A673 (cell line): ENCODE measurements at regions of chr16 and their contacts with region 1.

Region 1: GRCh38 chr16:46908540-46909372 is 24.6 kb downstream of the GPT2 start:
- DNase-seq: peak; percentile 80
- H3K4me3 ChIP-seq: no peak overlapping the region
- H3K27ac ChIP-seq: no peak overlapping the region
- H3K4me1 ChIP-seq: no peaks in the 10 kb centered on the region
- H3K27me3 ChIP-seq: no peaks in the 10 kb centered on the region
- CTCF ChIP-seq: peak; percentile 69

Region 2: DNA sequence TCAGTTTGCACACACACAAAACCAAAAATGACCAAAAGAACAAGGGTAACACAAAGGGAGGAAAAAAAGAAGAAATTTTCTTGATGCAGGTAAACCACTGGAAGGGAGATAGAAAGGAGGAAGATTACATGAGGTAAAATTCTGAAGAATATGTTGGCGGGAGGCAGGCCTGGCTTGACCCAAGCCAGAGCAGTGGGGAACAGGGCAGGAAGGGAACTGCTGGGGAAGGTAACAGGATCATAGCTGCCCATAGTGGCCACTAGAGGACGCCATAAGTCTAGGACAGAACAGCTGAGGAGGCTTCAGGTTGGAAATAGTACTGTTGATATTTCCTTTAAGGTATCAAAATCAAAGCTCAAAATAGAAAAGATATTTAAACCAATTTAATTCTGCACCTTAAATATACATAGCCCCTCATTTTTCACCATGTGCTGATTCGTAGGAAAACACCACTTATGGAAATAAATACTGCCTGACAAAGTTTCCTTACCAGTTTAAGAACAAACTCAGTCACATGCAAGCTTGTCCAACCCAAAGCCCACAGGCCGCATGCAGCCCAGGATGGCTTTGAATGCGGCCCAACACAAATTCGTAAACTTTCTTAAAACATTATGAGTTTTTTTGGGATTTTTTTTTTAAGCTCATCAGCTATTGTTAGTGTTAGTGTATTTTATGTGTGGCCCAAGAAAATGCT is 235.3 kb before region 1 on chr16:
- CTCF ChIA-PET with region 1: interaction called, 3 read pairs
- POLR2A ChIA-PET with region 1: no interaction called
- intact Hi-C with region 1: loop called (anchors 1 kb)
- DNase-seq: peak; percentile 71
- H3K4me3 ChIP-seq: no peak overlapping the region
- H3K27ac ChIP-seq: no peak overlapping the region
- H3K4me1 ChIP-seq: no peaks in the 10 kb centered on the region
- H3K27me3 ChIP-seq: no peaks in the 10 kb centered on the region
- CTCF ChIP-seq: peak; percentile 91

Region 3: GRCh38 chr16:46853713-46854443 is 54.9 kb before region 1 on chr16:
- CTCF ChIA-PET with region 1: interaction called, 41 read pairs
- POLR2A ChIA-PET with region 1: no interaction called
- intact Hi-C with region 1: loop called (anchors 1 kb)
- DNase-seq: peak; percentile 79
- H3K4me3 ChIP-seq: no peak overlapping the region
- H3K27ac ChIP-seq: no peak overlapping the region
- H3K4me1 ChIP-seq: no peaks in the 10 kb centered on the region
- H3K27me3 ChIP-seq: no peaks in the 10 kb centered on the region
- CTCF ChIP-seq: peak; percentile 84

Region 4: DNA sequence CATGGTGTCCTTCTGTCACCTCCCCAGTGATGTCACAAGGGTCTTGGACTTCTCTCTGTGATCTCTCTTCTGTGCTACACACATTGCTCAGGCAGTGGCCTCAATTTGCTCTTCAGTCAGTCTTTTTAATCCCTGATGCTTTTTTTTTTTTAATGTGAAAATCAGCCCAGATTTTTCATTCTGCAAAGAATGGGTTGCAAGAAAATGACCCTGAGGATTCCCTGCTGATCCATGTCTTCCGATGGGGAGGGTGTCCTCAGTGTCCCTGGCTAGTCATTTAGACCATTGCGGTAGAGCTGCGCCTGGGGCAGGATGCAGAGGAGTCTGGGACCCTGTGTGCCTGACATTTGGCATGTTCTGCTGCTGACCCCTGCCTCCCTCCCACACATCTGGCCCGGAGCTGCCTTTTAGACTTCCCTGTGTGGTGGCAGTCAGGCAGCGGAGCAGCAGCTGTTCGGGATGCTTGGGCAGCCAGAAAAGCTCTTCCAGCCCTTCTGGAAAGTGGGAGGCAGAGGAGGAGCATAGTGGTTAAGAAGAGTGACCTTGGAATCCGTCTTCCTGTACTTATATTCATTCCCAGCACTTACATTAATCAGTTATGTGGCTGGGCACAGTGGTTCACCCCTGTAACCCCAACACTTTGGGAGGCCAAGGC is 12.3 kb before region 1 on chr16:
- CTCF ChIA-PET with region 1: interaction called, 14 read pairs
- POLR2A ChIA-PET with region 1: no interaction called
- intact Hi-C with region 1: no loop called
- DNase-seq: no peak
- H3K4me3 ChIP-seq: no peak overlapping the region
- H3K27ac ChIP-seq: no peak overlapping the region
- H3K4me1 ChIP-seq: peaks cover 6% of the 10 kb centered on the region
- H3K27me3 ChIP-seq: no peaks in the 10 kb centered on the region
- CTCF ChIP-seq: no peak

Region 5: GRCh38 chr16:46961373-46962353 is 52.9 kb after region 1 on chr16:
- CTCF ChIA-PET with region 1: no interaction called
- POLR2A ChIA-PET with region 1: no interaction called
- intact Hi-C with region 1: no loop called
- DNase-seq: no peak
- H3K4me3 ChIP-seq: no peak overlapping the region
- H3K27ac ChIP-seq: no peak overlapping the region
- H3K4me1 ChIP-seq: no peaks in the 10 kb centered on the region
- H3K27me3 ChIP-seq: no peaks in the 10 kb centered on the region
- CTCF ChIP-seq: no peak